Thyroid gland (tissue), 4 donors: ENCODE measurements at regions of chr22 and their contacts with region 1.

Region 1: GRCh38 chr22:32474635-32475467 is at the start of gene FBXO7:
- DNase-seq: peak; percentile 93 to 94
- H3K4me3 ChIP-seq: peak within 1 kb of the TSS; percentile 83 to 90 (median 85)
- H3K27ac ChIP-seq: peak within 1 kb of the TSS; percentile 99 to 100 (median 99)
- H3K4me1 ChIP-seq: peaks cover 17 to 28% of the 10 kb centered on the region in 2 donors
- H3K27me3 ChIP-seq: no peaks in the 10 kb centered on the region
- CTCF ChIP-seq: peak in 4 of 6 experiments; percentile 14 to 42 (median 30)
- POLR2A ChIP-seq: peak; percentile 35 to 82
- total RNA-seq, gene FBXO7: 197 to 321 (median 253) TPM

Region 2: DNA sequence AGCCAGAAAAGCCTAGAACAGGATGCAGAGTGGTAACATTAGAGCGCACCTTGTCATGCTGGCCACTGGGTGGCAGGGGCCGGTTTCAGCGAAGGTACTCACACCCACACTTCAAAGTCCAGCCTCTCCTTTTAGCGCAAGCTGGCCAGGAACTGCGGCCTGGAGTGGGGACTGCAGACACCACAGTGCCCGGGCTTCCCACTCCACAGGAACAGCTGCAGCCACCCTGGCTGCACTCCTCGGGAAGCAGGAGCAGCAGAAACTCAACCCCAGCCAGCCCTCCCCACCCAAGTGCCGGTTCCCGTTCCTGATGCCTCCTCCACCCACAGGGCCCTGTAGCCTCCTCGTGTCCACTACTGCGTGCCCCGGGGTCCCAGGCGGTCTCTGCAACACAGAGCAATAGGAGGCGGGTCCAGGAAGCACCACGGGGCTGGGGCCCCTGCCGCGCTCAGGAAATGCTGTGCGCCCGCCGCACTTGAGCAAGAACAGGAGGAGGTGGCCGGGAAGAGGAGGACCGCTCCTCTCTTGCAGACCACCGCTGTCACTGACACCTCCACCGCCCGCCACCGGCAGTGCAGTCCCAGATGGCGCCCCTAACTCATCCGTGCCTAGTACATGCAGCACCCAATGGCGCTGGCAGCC is 272.2 kb before region 1 on chr22:
- intact Hi-C with region 1: loop called (anchors 10 kb)
- DNase-seq: peak; percentile 77 to 78
- H3K4me3 ChIP-seq: peak overlapping the region in 1 of 3 donors; percentile 17
- H3K27ac ChIP-seq: no peak overlapping the region
- H3K4me1 ChIP-seq: peaks cover 0 to 13% of the 10 kb centered on the region in 2 donors
- H3K27me3 ChIP-seq: no peaks in the 10 kb centered on the region
- CTCF ChIP-seq: peak in 5 of 6 experiments; percentile 53 to 85 (median 67)
- POLR2A ChIP-seq: no peak